ENCODE measurements at regions of chr1 and their contacts with region 1.

Region 1: GRCh38 chr1:70685300-70686241 is 274.5 kb downstream of the CTH start:
- DNase-seq: peak; percentile 53 to 85 (median 55)
- ATAC-seq: peak; percentile 100
- H3K4me3 ChIP-seq: no peak overlapping the region
- H3K27ac ChIP-seq: no peak overlapping the region
- H3K4me1 ChIP-seq: no peaks in the 10 kb centered on the region
- H3K27me3 ChIP-seq: no peaks in the 10 kb centered on the region
- CTCF ChIP-seq: peak; percentile 84 to 92 (median 88)
- POLR2A ChIP-seq: no peak

Region 2: DNA sequence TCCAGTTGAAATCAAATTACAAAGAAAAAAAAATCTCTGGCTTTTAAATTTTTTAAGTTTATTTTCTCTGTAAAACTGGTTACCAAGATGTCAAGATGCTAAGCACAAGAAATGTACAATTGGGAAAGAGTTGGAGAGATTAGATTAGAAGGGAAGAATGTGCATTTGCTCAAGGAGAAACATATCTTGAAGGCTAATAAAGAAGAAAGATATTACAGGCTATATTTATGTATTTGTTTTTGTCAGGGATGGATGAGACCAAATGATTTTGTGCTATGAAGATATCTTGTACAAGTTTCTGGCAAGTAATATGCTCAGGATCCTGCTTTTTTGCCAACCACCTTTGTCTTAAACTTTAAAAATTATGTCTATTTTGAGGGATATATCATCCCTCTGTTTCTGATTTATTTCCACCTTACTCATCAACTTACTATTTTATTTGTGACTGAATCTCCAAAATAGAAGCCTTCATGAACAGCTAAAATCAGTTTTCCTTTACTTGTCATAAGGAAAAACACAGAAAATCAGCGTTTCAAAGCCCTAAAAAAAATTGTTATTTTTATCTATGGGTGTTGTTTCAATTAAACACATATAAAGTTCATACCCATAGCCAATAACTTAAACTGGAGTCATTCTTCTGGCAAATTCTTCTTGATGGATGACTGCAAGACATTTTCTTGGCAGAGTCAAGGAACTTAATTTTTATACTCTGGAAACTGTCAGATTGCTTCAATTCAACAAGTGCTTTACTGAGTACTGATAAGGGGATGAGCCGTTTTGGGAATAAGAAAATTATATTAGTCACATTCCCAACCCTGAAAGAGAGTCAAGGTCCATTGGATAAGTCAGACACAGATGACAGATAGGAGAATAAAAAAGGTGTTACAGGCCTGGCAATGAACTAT is 132.7 kb before region 1 on chr1:
- intact Hi-C with region 1: no loop called
- DNase-seq: no peak
- ATAC-seq: no peak
- H3K4me3 ChIP-seq: no peak overlapping the region
- H3K27ac ChIP-seq: peak overlapping the region in 1 of 3 donors; percentile 9
- H3K4me1 ChIP-seq: no peaks in the 10 kb centered on the region
- H3K27me3 ChIP-seq: no peaks in the 10 kb centered on the region
- CTCF ChIP-seq: no peak
- POLR2A ChIP-seq: no peak

Region 3: GRCh38 chr1:70745199-70745598 is 59.6 kb after region 1 on chr1:
- intact Hi-C with region 1: no loop called
- DNase-seq: no peak
- ATAC-seq: peak in 1 of 4 donors; percentile 25
- H3K4me3 ChIP-seq: no peak overlapping the region
- H3K27ac ChIP-seq: no peak overlapping the region
- H3K4me1 ChIP-seq: no peaks in the 10 kb centered on the region
- H3K27me3 ChIP-seq: no peaks in the 10 kb centered on the region
- CTCF ChIP-seq: peak; percentile 14 to 26 (median 20)
- POLR2A ChIP-seq: no peak

Region 4: DNA sequence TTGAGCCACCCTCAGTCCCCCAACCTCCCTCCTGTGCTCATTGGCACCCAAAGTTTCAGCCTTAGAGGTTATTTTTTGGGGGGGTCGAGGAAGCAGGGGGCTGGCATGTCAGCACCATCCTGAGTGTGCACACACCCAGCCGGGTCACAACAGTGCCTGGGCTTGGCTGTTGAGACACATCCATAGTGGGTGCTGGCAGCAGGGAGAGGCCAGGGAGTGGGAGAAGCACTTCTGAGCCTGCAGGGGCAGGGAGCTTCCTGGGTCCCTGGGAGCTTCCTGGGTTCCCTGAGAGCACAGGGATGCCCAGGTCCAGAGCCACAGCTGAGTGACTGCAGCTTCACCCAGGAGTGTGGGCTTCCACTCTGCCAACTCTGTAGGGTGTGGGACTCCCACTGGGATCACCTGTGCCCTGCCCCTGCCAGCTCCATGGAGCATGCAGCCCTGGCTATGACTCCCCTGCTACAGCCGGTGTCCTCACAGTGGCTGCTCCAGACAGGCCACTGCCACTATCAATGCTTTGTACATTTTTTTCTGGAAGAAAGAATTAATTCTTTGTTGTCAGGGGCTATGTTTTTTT is 121.6 kb after region 1 on chr1:
- intact Hi-C with region 1: no loop called
- DNase-seq: no peak
- ATAC-seq: peak in 1 of 4 donors; percentile 36
- H3K4me3 ChIP-seq: no peak overlapping the region
- H3K27ac ChIP-seq: no peak overlapping the region
- H3K4me1 ChIP-seq: no peaks in the 10 kb centered on the region
- H3K27me3 ChIP-seq: no peaks in the 10 kb centered on the region
- CTCF ChIP-seq: no peak
- POLR2A ChIP-seq: no peak

Region 5: DNA sequence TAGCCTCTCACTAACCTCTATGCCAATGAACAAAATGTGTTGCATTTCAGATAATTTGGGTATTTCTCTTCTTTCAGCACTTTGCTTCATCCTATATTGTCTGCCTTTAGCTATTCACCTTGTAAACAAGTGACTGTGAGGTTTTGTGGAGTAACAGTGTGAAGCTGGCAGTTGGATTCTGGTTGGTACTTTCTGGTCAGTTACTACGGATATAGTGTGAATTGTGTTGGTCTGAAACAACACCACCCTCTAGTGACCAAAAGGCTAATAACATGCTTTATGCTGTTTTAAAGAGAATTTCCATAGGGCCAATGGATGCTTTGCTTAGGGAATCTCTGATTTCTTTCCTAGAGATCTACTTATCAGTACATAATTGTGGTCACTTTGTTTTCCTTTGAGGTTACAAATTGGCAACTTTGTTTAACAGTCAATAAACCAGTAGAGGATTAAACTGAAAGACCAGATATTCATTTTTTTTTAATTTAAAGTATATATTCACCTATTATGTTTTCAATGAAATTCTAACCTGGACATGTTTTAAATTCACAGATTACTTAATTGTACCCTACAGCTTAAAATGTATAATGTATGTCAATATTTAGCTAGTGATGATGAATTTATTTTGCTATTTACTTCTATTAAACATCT is 364.5 kb after region 1 on chr1:
- intact Hi-C with region 1: loop called in 1 of 2 experiments (anchors 10 kb)
- DNase-seq: no peak
- ATAC-seq: peak; percentile 84 to 88 (median 88)
- H3K4me3 ChIP-seq: no peak overlapping the region
- H3K27ac ChIP-seq: no peak overlapping the region
- H3K4me1 ChIP-seq: peaks cover 0 to 18% (median 5%) of the 10 kb centered on the region in 4 donors
- H3K27me3 ChIP-seq: peaks cover 0 to 25% of the 10 kb centered on the region in 2 donors
- CTCF ChIP-seq: peak; percentile 67 to 77 (median 74)
- POLR2A ChIP-seq: no peak

Measured in right lobe of liver (tissue), 6 donors.